ENCODE measurements at regions of chr1 and their contacts with region 1.

Region 1: DNA sequence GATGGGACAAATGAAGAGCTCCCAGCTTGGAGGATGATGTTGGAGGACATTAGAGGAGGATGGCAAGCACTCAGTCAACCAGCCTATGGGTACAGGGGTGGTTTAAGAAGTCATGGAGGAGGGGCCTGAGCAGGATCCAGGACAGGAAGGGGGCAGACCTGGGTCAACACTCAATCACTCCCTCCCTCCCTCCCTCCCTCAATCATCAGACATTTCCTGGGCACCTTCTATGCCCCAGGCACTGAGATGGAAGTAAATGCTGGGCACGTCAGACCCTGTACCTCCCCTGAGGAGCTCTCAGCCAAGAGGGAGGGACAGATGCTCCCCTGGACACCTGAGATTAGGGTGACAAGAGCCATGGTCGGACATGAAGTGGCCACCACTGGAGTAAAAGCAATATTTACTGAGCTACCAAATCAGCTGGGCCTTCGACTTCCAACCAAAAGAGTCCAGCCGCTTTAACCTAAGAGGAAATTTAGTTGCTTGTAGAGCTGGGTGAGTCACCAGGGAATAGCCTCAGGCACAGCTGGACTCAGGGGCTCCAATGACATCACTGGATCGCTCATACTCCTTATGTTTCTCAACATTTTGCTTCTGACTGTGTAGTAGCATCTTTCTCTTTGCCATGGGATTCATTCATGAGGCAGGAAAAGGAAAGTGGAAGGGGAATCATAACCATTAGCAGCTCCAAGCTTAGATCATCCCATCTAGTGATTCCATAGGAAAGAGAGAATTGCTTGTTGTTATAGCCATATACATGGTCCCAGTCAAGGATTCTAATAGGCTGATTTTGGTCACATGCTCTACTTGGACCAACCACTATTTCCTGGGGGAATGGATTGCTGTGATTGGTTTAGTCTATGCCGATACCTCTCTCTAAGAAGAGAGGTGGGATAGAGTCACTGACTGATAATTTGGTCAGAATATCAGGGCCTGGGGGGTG is 664.5 kb downstream of the MATN1 start:
- DNase-seq: peak; percentile 65
- H3K4me3 ChIP-seq: no peak overlapping the region
- H3K27ac ChIP-seq: no peak overlapping the region
- H3K4me1 ChIP-seq: no peaks in the 10 kb centered on the region
- H3K27me3 ChIP-seq: peaks cover 8% of the 10 kb centered on the region
- CTCF ChIP-seq: no peak

Region 2: DNA sequence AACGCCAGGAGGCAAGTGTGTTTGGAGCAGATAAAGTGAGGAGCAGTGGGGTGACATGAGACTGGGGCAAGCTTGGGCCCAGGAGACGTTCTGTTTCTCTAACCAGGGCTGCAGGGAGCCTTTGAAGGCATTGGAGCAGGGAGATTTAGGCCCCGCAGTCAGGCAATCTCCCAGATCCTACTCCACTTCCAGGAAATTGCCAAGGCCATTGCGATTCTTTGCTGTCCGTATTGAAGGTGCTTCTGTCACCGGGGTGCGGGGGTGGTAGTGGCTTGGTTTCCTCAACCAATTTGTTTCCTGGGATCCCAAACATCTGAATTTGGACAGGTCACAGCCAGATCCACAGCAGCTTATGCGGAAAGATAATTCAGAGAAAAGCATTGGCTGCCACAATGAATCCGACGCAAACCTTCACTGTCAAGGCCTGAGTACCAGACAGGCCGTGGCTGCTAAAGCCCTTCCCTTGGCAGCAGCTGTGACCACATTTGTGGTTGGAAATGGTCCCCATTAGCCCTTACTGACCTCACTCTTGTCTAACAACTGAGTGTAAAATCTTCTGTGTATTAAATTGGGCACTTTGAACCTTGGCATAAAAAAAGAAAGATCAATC is 437.0 kb before region 1 on chr1:
- CTCF ChIA-PET with region 1: no interaction called
- POLR2A ChIA-PET with region 1: no interaction called
- intact Hi-C with region 1: no loop called
- DNase-seq: no peak
- H3K4me3 ChIP-seq: no peak overlapping the region
- H3K27ac ChIP-seq: no peak overlapping the region
- H3K4me1 ChIP-seq: no peaks in the 10 kb centered on the region
- H3K27me3 ChIP-seq: peaks cover 9% of the 10 kb centered on the region
- CTCF ChIP-seq: no peak

Region 3: GRCh38 chr1:29991025-29991424 is 67.9 kb before region 1 on chr1:
- CTCF ChIA-PET with region 1: no interaction called
- POLR2A ChIA-PET with region 1: no interaction called
- intact Hi-C with region 1: loop called (anchors 10 kb)
- DNase-seq: no peak
- H3K4me3 ChIP-seq: no peak overlapping the region
- H3K27ac ChIP-seq: no peak overlapping the region
- H3K4me1 ChIP-seq: no peaks in the 10 kb centered on the region
- H3K27me3 ChIP-seq: peaks cover 4% of the 10 kb centered on the region
- CTCF ChIP-seq: no peak

Region 4: DNA sequence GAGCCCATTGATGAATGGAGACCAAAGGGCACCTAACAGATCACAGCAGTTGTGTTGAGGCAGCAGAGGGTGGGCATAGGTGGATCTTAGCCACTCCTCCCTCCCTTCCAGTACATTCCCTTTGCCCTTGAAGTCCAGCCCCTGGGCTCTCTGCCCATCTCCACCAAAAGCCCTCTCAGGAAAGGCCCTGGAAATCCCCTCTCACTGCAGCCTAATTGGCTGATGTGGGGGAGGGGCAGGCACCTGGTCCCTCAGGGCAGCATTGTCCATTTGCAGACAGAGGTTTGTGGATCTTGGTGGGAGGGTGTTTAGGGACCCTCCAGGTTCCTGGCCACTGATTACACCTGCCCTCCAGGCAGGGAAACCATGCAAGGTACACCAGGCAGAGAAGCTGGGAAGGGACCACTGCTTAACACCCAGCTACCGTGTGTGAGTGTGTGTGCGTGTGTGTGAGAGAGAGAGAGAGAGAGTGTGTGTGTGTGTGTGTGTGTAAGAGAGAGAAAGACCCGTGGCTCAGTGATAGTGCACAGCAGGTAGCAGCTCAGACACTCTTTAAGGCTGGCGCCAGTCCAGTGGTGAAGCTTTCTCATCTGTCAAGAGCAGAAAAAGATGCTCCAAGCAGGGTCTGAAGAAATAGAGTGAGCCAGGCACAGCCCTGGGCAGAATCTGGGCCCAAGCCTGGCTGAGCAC is 593.4 kb after region 1 on chr1:
- CTCF ChIA-PET with region 1: no interaction called
- POLR2A ChIA-PET with region 1: no interaction called
- intact Hi-C with region 1: no loop called
- DNase-seq: peak; percentile 40
- H3K4me3 ChIP-seq: no peak overlapping the region
- H3K27ac ChIP-seq: no peak overlapping the region
- H3K4me1 ChIP-seq: peaks cover 9% of the 10 kb centered on the region
- H3K27me3 ChIP-seq: no peaks in the 10 kb centered on the region
- CTCF ChIP-seq: no peak